GM10248 (cell line): ENCODE measurements at regions of chr6 and their contacts with region 1.

Region 1: DNA sequence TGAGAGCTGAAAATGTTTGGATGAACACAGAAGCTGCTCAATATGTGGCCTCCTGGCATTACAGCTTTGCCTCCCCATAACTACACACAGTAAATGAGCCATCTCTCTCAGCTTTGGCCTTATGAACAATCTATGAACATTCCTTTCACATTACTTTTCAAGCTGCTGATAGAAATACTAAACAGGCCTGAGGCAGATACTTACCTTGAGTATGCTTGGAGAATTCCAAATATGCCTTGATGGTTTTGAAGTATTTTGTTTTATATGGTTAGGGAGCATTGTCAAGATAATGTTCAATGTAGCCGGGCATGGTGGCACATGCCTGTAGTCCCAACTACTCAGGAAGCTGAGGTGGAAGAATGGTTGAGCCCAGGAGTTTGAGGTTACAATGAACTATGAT is 104.5 kb downstream of the CD24 start:
- DNase-seq: no peak
- CTCF ChIP-seq: no peak

Region 2: DNA sequence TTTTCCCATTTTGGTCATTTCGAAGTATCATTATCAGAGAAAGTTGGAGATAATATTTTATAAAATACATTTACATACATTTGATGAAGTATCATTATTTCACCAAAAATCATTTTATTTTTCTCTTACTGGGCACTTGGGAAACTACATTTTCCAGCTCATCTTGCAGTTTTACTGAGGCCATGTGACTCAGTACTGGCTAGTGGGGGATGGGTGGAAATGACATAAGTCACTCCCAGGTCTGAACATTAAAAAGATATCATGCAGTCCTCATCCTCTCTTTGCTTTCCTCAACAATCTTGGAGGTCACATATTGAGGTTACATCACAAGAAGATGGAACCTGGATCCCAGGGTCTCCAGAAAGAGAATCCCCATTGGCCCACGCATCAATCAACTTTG is 20.4 kb after region 1 on chr6:
- CTCF ChIA-PET with region 1: interaction called, 10 read pairs
- POLR2A ChIA-PET with region 1: no interaction called
- DNase-seq: no peak
- CTCF ChIP-seq: no peak